ENCODE measurements at regions of chr12 and their contacts with region 1.

Region 1: GRCh38 chr12:3129301-3130056 is 52.3 kb downstream of the TSPAN9 start:
- DNase-seq: peak; percentile 15
- H3K4me3 ChIP-seq: no peak overlapping the region
- H3K27ac ChIP-seq: no peak overlapping the region
- H3K4me1 ChIP-seq: peaks cover 11% of the 10 kb centered on the region
- H3K27me3 ChIP-seq: no peaks in the 10 kb centered on the region

Region 2: DNA sequence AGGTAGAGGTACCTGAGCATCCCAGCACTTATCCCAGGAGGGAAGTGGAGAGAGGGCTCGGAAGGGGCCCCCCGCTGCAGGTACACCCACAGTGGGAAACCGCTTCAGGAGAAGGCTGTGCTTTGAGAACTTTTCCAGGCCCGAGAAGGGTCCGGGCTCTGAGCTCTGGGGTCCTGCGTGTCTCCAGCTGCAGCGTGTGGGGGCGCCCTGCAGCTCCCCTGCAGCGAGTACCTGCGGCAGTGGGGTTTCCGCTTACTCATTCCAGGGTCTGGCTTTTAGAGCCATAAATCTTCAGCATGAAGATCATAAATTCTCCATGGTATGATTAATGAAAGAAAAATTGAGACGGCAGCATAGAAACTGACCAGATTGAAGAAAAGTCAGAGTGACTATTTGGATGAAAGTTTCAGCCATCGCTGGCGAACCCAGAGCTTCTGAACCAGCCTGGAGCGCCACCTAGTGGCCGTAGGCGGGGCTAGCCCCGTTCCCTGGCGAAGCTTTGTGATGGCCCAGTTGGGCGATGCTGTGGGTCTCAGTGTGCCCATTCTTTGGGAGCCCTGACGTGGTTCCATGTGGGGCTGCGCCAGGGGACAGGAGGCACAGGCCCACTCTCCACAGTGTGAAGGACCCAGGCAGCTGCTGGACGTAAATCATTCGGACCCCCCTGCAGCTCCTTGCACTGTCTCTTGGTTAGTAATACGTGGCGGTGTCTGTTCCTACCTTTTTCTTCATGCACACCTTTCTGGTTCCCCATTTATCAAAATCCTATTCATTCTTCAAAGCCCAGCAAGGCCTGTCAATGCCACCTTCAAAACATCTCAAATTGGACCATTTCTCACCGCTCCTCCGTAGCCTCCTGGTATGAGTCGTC is 145.9 kb after region 1 on chr12:
- in situ Hi-C with region 1: loop called (anchors 5 kb)
- DNase-seq: peak; percentile 81
- H3K4me3 ChIP-seq: no peak overlapping the region
- H3K27ac ChIP-seq: no peak overlapping the region
- H3K4me1 ChIP-seq: no peaks in the 10 kb centered on the region
- H3K27me3 ChIP-seq: no peaks in the 10 kb centered on the region

Measured in GM23248 (cell line).